ENCODE measurements at regions of chr1 and their contacts with region 1.

Region 1: GRCh38 chr1:42259739-42260064 is 75.3 kb downstream of the FOXJ3 start:
- DNase-seq: no peak
- H3K4me3 ChIP-seq: peak overlapping the region in 24 of 59 donors; percentile 3 to 44 (median 22)
- H3K27ac ChIP-seq: peak overlapping the region; percentile 40 to 97 (median 89)
- H3K27me3 ChIP-seq: no peaks in the 10 kb centered on the region
- CTCF ChIP-seq: no peak

Region 2: GRCh38 chr1:42173155-42173933 is 86.4 kb before region 1 on chr1:
- intact Hi-C with region 1: loop called in 1 of 2 experiments (anchors 5 kb)
- DNase-seq: peak in 9 of 10 donors; percentile 57 to 79 (median 71)
- H3K4me3 ChIP-seq: peak overlapping the region in 1 of 59 donors; percentile 0
- H3K27ac ChIP-seq: peak overlapping the region in 36 of 59 donors; percentile 0 to 64 (median 30)
- H3K27me3 ChIP-seq: no peaks in the 10 kb centered on the region
- CTCF ChIP-seq: peak; percentile 76 to 99 (median 95)

Measured in dorsolateral prefrontal cortex (tissue), 120 donors.